ENCODE measurements at regions of chr14 and their contacts with region 1.

Region 1: DNA sequence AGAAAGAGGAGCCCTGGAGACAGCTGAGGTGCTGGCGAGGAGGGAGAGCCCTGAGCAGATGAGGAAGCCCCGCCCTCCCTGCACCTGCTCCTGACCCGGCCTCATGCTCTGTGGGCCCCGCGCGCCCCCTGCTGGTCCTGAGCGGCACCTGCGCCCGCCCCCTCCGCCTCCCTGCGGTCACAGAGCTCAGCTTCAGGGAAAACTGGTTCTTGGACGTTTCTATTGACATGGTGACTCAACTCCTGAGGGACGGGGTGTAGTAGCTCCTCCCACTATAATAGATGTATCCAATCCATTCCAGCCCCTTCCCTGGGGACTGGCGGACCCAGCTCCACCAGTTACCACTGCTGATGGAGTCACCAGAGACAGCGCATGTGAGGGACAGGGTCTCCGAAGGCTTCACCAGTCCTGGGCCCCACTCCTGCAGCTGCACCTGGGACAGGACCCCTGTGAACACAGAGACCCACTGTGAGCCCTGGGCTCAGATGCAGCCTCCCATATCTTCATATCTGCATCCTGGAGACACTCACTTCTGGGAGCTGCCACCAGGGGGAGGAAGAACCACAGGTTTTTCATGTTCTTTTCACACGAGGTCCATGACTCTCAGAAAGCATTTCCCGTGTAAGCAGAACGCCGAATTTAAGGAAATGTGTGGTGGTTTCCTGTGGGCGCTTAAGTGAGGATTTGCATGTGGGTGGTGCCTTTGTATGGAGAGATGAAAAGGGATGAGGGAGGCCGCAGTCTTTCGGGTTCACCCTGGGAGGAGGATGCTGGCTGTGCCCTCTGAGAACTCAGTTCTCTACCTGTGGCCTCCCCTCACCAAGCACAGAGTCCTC is 1346.4 kb downstream of the TMEM121 start:
- DNase-seq: peak; percentile 82
- H3K4me3 Mint-ChIP-seq: no peak overlapping the region
- H3K27ac Mint-ChIP-seq: no peak overlapping the region
- H3K4me1 Mint-ChIP-seq: peaks cover 16% of the 10 kb centered on the region
- H3K27me3 Mint-ChIP-seq: peaks cover 40% of the 10 kb centered on the region

Region 2: DNA sequence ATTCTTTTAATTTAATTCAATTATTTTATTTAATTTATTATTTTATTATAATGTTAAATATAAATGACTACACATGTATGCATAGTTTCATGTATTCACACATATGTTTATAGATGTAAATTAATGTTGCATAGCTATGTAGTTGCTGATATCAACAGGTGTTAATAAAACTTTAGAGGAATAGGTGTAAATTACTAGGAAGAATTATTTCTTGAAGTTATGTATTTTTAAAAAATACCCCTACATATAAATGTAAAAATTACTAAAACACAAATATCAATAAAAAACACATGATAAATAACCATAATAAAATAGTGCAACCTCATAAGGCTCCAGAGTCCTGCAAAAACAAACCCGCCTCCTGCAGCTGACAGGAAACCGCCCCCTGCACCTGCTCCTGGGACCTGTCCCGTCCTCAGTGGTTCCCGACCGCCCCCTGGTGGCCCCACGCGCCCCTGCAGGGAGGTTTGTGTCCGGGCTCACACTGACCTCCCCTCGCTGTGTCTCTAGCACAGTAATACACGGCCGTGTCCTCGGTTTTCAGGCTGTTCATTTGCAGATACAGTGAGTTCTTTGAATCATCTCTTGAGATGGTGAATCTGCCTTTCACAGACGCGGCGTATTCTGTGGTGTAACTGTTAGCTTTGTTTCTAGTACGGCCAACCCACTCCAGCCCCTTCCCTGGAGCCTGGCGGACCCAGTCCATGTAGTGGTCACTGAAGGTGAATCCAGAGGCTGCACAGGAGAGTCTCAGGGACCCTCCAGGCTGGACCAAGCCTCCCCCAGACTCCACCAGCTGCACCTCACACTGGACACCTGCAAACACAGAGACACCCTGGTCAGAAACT is 82.4 kb before region 1 on chr14:
- CTCF ChIA-PET with region 1: interaction called, 11 read pairs
- POLR2A ChIA-PET with region 1: no interaction called
- DNase-seq: peak; percentile 78
- H3K4me3 Mint-ChIP-seq: no peak overlapping the region
- H3K27ac Mint-ChIP-seq: no peak overlapping the region
- H3K4me1 Mint-ChIP-seq: peaks cover 11% of the 10 kb centered on the region
- H3K27me3 Mint-ChIP-seq: peaks cover 39% of the 10 kb centered on the region

Region 3: DNA sequence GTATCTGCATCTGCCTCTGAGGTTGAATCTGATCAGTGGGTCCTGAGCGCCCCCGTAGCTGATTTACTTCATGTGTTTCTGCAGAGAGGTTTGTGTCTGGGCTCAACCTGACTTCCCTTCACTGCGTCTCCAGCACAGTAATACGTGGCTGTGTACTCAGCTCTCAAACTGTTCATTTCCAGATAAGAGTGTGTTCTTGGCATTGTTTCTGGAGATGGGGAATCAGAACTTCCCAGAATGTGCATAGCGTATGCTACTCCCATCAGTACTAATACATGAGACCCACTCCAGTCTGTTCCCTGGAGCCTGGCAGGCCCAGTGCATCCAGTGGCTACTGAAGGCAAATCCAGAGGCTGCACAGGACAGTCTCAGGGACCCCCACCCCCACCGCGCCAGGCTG is 49.3 kb before region 1 on chr14:
- CTCF ChIA-PET with region 1: interaction called, 17 read pairs
- POLR2A ChIA-PET with region 1: no interaction called
- DNase-seq: no peak
- H3K4me3 Mint-ChIP-seq: no peak overlapping the region
- H3K27ac Mint-ChIP-seq: no peak overlapping the region
- H3K4me1 Mint-ChIP-seq: peaks cover 4% of the 10 kb centered on the region
- H3K27me3 Mint-ChIP-seq: peaks cover 36% of the 10 kb centered on the region

Region 4: GRCh38 chr14:106837870-106838269 is 35.0 kb before region 1 on chr14:
- CTCF ChIA-PET with region 1: interaction called, 15 read pairs
- POLR2A ChIA-PET with region 1: no interaction called
- DNase-seq: no peak
- H3K4me3 Mint-ChIP-seq: no peak overlapping the region
- H3K27ac Mint-ChIP-seq: no peak overlapping the region
- H3K4me1 Mint-ChIP-seq: no peaks in the 10 kb centered on the region
- H3K27me3 Mint-ChIP-seq: peaks cover 37% of the 10 kb centered on the region

Region 5: GRCh38 chr14:106844608-106845285 is 28.1 kb before region 1 on chr14:
- CTCF ChIA-PET with region 1: interaction called, 16 read pairs
- POLR2A ChIA-PET with region 1: interaction called, 4 read pairs
- DNase-seq: peak; percentile 57
- H3K4me3 Mint-ChIP-seq: peak overlapping the region; percentile 84
- H3K27ac Mint-ChIP-seq: no peak overlapping the region
- H3K4me1 Mint-ChIP-seq: peaks cover 14% of the 10 kb centered on the region
- H3K27me3 Mint-ChIP-seq: peaks cover 63% of the 10 kb centered on the region

Region 6: DNA sequence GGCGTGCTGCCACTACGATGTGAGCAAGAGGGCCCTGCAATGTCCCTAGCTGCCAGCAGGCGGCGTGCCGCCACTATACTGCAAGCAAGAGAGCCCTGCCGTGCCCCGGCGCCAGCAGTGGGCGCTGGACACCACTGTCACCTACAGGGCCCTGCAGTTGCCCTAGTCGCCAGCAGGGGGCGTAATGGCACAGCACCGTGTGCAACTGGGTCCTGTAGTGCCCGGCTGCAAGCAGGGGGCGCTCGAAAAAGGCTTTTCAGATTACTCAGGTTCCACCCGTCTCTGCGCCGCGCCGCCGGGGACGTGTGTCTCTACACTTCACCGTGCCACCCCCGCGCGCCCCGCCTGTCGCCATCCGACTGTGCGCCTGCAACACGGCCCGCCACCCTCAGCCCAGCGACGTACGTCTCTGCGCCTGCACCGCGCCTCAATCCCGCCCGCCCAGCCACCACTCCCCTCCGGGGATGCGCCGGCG is 10.4 kb after region 1 on chr14:
- CTCF ChIA-PET with region 1: interaction called, 18 read pairs
- POLR2A ChIA-PET with region 1: no interaction called
- DNase-seq: peak; percentile 46
- H3K4me3 Mint-ChIP-seq: no peak overlapping the region
- H3K27ac Mint-ChIP-seq: no peak overlapping the region
- H3K4me1 Mint-ChIP-seq: no peaks in the 10 kb centered on the region
- H3K27me3 Mint-ChIP-seq: peaks cover 6% of the 10 kb centered on the region

Measured in activated CD4-positive, alpha-beta memory T cell treated with anti-CD3 and anti-CD28 coated beads, Interleukin-2, amount 10 ng/mL, durations not matched to agents 7 days and 5 days (primary cell).